ENCODE measurements at regions of chrX and their contacts with region 1.

Region 1: GRCh38 chrX:107672955-107673378 is 44.7 kb downstream of the PRPS1 start:
- DNase-seq: peak; percentile 41 to 93 (median 88)
- ATAC-seq: peak; percentile 69
- H3K4me3 ChIP-seq: peak overlapping the region; percentile 58
- H3K4me3 Mint-ChIP-seq: peak overlapping the region; percentile 65 to 90 (median 84)
- H3K27ac ChIP-seq: peak overlapping the region; percentile 99
- H3K27ac Mint-ChIP-seq: peak overlapping the region; percentile 96 to 100 (median 98)
- H3K4me1 ChIP-seq: peaks cover 34 to 36% of the 10 kb centered on the region in 2 donors
- H3K4me1 Mint-ChIP-seq: peaks cover 14 to 72% (median 44%) of the 10 kb centered on the region in 7 donors
- H3K27me3 ChIP-seq: no peaks in the 10 kb centered on the region
- H3K27me3 Mint-ChIP-seq: no peaks in the 10 kb centered on the region

Region 2: DNA sequence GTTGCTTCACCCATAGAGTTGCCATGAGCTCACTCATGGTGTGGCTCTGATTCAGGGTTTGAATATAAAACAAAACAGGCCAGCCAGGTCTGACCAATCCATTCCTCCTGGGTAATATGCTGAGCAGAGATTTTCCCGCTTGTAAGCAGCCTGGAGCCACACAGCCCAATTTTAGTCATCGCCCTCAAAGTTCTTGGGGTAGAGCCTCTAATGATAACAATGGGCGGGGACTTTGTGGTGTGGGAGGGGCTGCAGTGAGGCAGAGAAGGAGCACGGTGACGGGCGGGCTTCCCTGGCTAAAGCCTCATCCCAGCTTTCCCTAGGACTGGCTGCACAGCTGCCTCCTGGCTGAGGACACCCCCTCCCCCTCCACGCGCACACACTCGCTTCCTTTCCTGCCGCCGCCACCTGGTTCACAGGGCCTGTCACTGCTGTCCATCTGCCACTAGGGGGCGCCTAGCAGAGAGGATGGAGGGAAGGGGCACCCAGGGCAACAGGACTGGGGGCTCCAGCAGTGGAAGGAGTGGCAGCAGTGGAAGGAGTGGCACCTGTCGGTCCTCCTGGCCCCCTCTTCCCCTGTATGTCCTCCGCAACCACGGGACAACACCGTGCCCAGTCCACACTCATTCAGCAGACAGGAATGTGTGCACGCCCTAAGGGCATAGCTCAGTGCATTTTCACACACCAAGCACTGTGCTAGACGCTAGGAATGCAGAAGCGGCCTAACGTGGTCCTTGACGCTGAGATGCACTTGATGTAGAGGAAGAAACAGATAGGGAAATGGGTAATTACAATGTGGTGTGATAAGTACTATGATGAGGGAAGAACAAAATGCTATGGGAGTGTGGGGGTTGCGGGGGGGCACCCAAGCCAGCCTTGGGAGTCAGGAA is 17.9 kb before region 1 on chrX:
- CTCF ChIA-PET with region 1: interaction called, 14 read pairs
- POLR2A ChIA-PET with region 1: interaction called, 14 read pairs
- intact Hi-C with region 1: loop called in 1 of 2 experiments (anchors 1 kb)
- DNase-seq: peak; percentile 49 to 76 (median 60)
- ATAC-seq: peak; percentile 94
- H3K4me3 ChIP-seq: no peak overlapping the region
- H3K4me3 Mint-ChIP-seq: no peak overlapping the region
- H3K27ac ChIP-seq: no peak overlapping the region
- H3K27ac Mint-ChIP-seq: peak overlapping the region in 7 of 9 donors; percentile 1 to 89 (median 72)
- H3K4me1 ChIP-seq: peaks cover 0 to 6% of the 10 kb centered on the region in 2 donors
- H3K4me1 Mint-ChIP-seq: peaks cover 6 to 30% (median 18%) of the 10 kb centered on the region in 7 donors
- H3K27me3 ChIP-seq: no peaks in the 10 kb centered on the region
- H3K27me3 Mint-ChIP-seq: no peaks in the 10 kb centered on the region

Region 3: GRCh38 chrX:107686792-107687191 is 13.8 kb after region 1 on chrX:
- CTCF ChIA-PET with region 1: interaction called, 3 read pairs
- POLR2A ChIA-PET with region 1: interaction called, 18 read pairs
- intact Hi-C with region 1: no loop called
- DNase-seq: no peak
- ATAC-seq: no peak
- H3K4me3 ChIP-seq: no peak overlapping the region
- H3K4me3 Mint-ChIP-seq: no peak overlapping the region
- H3K27ac ChIP-seq: no peak overlapping the region
- H3K27ac Mint-ChIP-seq: no peak overlapping the region
- H3K4me1 ChIP-seq: peaks cover 0 to 9% of the 10 kb centered on the region in 2 donors
- H3K4me1 Mint-ChIP-seq: peaks cover 20 to 43% (median 30%) of the 10 kb centered on the region in 7 donors
- H3K27me3 ChIP-seq: no peaks in the 10 kb centered on the region
- H3K27me3 Mint-ChIP-seq: no peaks in the 10 kb centered on the region

Region 4: DNA sequence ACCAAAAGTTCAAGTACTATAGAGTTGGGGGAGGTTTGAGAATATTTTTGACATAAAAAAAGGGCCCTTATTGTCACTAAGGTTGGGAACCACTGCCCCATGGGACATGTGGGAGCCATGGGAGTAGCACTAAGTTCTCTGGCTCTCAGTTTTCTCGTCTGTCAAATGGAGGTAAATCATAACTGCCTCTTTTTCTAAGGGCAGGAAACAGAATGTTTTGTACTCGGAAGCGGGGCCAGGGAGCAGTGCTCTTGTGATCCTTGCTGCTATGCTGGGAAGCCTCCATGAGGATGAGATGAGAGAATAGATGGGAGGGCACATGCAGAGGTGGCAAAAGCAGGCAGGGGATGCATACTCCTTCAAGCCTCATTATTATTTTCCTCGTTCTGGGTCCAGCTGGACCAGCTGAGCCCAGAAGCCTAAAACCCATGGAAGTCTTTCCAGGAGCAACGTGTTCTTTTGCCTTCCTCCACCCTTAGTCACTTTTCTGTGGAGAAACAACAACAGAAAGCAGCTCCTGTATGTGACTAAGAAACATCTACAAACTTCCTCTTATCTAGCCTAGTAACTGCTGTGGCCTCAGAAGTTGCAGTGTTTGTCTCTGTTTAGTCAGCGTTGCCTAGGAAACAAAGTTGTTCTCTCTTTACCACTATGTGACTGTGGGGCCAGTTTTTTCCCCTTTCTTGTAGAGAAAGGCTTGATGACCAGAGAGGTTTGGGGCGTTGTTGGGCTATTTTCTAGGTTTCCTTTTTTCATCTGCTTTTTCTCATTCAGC is 37.8 kb after region 1 on chrX:
- CTCF ChIA-PET with region 1: interaction called, 264 read pairs
- POLR2A ChIA-PET with region 1: interaction called, 1,138 read pairs
- intact Hi-C with region 1: loop called (anchors 1 kb)
- DNase-seq: peak; percentile 6 to 92 (median 84)
- ATAC-seq: peak; percentile 55
- H3K4me3 ChIP-seq: peak overlapping the region; percentile 49
- H3K4me3 Mint-ChIP-seq: peak overlapping the region; percentile 61 to 94 (median 78)
- H3K27ac ChIP-seq: peak overlapping the region; percentile 100
- H3K27ac Mint-ChIP-seq: peak overlapping the region; percentile 97 to 100 (median 99)
- H3K4me1 ChIP-seq: peaks cover 42 to 43% of the 10 kb centered on the region in 2 donors
- H3K4me1 Mint-ChIP-seq: peaks cover 24 to 75% (median 62%) of the 10 kb centered on the region in 7 donors
- H3K27me3 ChIP-seq: no peaks in the 10 kb centered on the region
- H3K27me3 Mint-ChIP-seq: peaks cover 0 to 3% (median 0%) of the 10 kb centered on the region in 5 donors

Region 5: GRCh38 chrX:107716816-107717700 is 44.1 kb after region 1 on chrX:
- CTCF ChIA-PET with region 1: interaction called, 264 read pairs
- POLR2A ChIA-PET with region 1: interaction called, 1,138 read pairs
- intact Hi-C with region 1: loop called (anchors 1 kb)
- DNase-seq: peak; percentile 77 to 96 (median 91)
- ATAC-seq: peak; percentile 68
- H3K4me3 ChIP-seq: peak overlapping the region; percentile 97
- H3K4me3 Mint-ChIP-seq: peak overlapping the region; percentile 87 to 96 (median 92)
- H3K27ac ChIP-seq: peak overlapping the region; percentile 100
- H3K27ac Mint-ChIP-seq: peak overlapping the region; percentile 94 to 100 (median 98)
- H3K4me1 ChIP-seq: peaks cover 33 to 41% of the 10 kb centered on the region in 2 donors
- H3K4me1 Mint-ChIP-seq: peaks cover 12 to 71% (median 54%) of the 10 kb centered on the region in 7 donors
- H3K27me3 ChIP-seq: no peaks in the 10 kb centered on the region
- H3K27me3 Mint-ChIP-seq: no peaks in the 10 kb centered on the region

Region 6: GRCh38 chrX:107741404-107741790 is 68.4 kb after region 1 on chrX:
- CTCF ChIA-PET with region 1: interaction called, 26 read pairs
- POLR2A ChIA-PET with region 1: interaction called, 32 read pairs
- intact Hi-C with region 1: loop called (anchors 1 kb)
- DNase-seq: peak in 1 of 9 donors; percentile 10
- ATAC-seq: no peak
- H3K4me3 ChIP-seq: peak overlapping the region; percentile 45
- H3K4me3 Mint-ChIP-seq: peak overlapping the region; percentile 80 to 96 (median 85)
- H3K27ac ChIP-seq: peak overlapping the region; percentile 72
- H3K27ac Mint-ChIP-seq: peak overlapping the region; percentile 94 to 100 (median 99)
- H3K4me1 ChIP-seq: peaks cover 26 to 45% of the 10 kb centered on the region in 2 donors
- H3K4me1 Mint-ChIP-seq: peaks cover 15 to 70% (median 45%) of the 10 kb centered on the region in 7 donors
- H3K27me3 ChIP-seq: no peaks in the 10 kb centered on the region
- H3K27me3 Mint-ChIP-seq: peaks cover 0 to 7% (median 0%) of the 10 kb centered on the region in 5 donors

Region 7: GRCh38 chrX:107894038-107894437 is 221.1 kb after region 1 on chrX:
- CTCF ChIA-PET with region 1: no interaction called
- POLR2A ChIA-PET with region 1: no interaction called
- intact Hi-C with region 1: loop called (anchors 5 kb)
- DNase-seq: peak in 7 of 9 donors; percentile 30 to 68 (median 61)
- ATAC-seq: peak; percentile 72
- H3K4me3 ChIP-seq: no peak overlapping the region
- H3K4me3 Mint-ChIP-seq: no peak overlapping the region
- H3K27ac ChIP-seq: no peak overlapping the region
- H3K27ac Mint-ChIP-seq: peak overlapping the region in 3 of 9 donors; percentile 20 to 90 (median 52)
- H3K4me1 ChIP-seq: no peaks in the 10 kb centered on the region
- H3K4me1 Mint-ChIP-seq: peaks cover 0 to 8% (median 0%) of the 10 kb centered on the region in 7 donors
- H3K27me3 ChIP-seq: no peaks in the 10 kb centered on the region
- H3K27me3 Mint-ChIP-seq: no peaks in the 10 kb centered on the region